Activated CD4-positive, alpha-beta memory T cell treated with anti-CD3 and anti-CD28 coated beads for 36 hours (primary cell): ENCODE measurements at regions of chr16 and their contacts with region 1.

Region 1: GRCh38 chr16:81314603-81315270 is at the start of gene GAN:
- DNase-seq: peak; percentile 98
- H3K4me3 Mint-ChIP-seq: peak within 1 kb of the TSS; percentile 84
- H3K27ac Mint-ChIP-seq: peak within 1 kb of the TSS; percentile 71
- H3K4me1 Mint-ChIP-seq: peaks cover 61% of the 10 kb centered on the region
- H3K27me3 Mint-ChIP-seq: no peaks in the 10 kb centered on the region
- total RNA-seq, gene GAN: 13.6 to 14.5 TPM

Region 2: GRCh38 chr16:81035398-81035974 is 279.3 kb before region 1 on chr16 and contains the start of gene ATMIN:
- CTCF ChIA-PET with region 1: interaction called, 3 read pairs
- POLR2A ChIA-PET with region 1: no interaction called
- intact Hi-C with region 1: loop called (anchors 10 kb)
- DNase-seq: peak; percentile 89
- H3K4me3 Mint-ChIP-seq: peak within 1 kb of the TSS; percentile 79
- H3K27ac Mint-ChIP-seq: no peak within 1 kb of the TSS
- H3K4me1 Mint-ChIP-seq: peaks cover 21% of the 10 kb centered on the region
- H3K27me3 Mint-ChIP-seq: no peaks in the 10 kb centered on the region
- total RNA-seq, gene ATMIN: 19.3 to 21.3 TPM

Region 3: DNA sequence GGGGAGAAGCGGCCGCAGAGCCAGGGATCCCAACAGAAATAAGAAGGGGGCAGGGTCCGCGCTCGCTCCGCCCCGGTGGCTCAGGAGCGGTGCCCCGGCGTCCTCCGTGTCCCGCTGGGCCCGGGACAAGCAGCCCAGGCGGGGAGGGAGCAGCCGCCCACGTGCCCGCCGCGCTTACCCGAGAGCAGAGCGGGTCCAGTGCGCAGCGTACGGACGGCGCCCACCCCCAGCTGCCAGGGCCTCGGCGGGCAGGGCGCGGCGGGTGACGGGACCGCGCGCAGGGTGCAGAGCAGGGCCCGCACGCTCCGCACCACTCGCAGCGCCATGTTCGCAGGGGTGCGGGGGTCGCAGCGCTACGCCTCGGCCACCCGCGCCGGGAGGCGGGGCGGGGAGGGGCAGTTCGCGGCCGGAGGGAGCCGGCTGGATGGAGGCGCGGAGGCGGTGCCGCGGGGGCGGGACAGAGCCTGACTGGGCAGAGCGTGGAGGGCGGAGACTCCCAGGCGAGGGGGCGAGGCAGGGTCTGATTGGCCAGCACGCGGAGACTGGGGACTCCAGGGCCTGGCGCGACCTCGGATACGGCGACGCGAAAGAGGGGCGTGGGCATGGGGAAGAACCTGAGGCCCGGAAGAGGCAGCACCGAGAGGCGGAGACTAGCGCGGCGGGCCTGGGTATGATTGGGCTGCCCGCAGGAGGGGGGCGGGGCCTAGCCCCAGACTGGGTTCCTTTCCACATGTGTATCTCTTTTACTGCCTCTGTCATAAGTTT is 218.6 kb before region 1 on chr16 and contains the start of gene GCSH:
- CTCF ChIA-PET with region 1: no interaction called
- POLR2A ChIA-PET with region 1: no interaction called
- intact Hi-C with region 1: loop called (anchors 1 kb)
- DNase-seq: peak; percentile 99
- H3K4me3 Mint-ChIP-seq: peak within 1 kb of the TSS; percentile 79
- H3K27ac Mint-ChIP-seq: peak within 1 kb of the TSS; percentile 70
- H3K4me1 Mint-ChIP-seq: peaks cover 14% of the 10 kb centered on the region
- H3K27me3 Mint-ChIP-seq: no peaks in the 10 kb centered on the region
- total RNA-seq, gene GCSH: 23.9 to 24.7 TPM

Region 4: DNA sequence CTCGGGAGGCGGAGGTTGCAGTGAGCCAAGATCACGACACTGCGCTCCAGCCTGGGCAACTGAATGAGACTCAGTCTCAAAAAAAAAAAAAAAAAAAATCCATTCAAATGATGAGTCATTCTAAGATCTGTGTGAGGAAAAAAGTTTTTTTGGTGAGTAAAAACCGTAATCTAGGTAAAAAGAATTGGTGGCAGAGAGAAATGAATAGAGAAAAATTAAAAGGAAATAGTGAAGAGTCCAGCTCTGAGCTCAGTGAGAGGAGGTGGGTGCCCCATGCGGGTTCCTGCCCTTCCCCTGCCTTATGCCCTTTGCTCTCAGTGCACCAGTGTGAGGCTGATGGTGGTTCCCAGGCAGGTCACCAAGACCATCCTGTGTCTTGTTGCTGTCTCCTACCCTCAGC is 20.9 kb after region 1 on chr16:
- CTCF ChIA-PET with region 1: interaction called, 5 read pairs
- POLR2A ChIA-PET with region 1: interaction called, 17 read pairs
- intact Hi-C with region 1: loop called (anchors 2 kb)
- DNase-seq: peak; percentile 75
- H3K4me3 Mint-ChIP-seq: no peak overlapping the region
- H3K27ac Mint-ChIP-seq: peak overlapping the region; percentile 52
- H3K4me1 Mint-ChIP-seq: peaks cover 20% of the 10 kb centered on the region
- H3K27me3 Mint-ChIP-seq: no peaks in the 10 kb centered on the region

Region 5: GRCh38 chr16:81632392-81633146 is 317.8 kb after region 1 on chr16:
- CTCF ChIA-PET with region 1: no interaction called
- POLR2A ChIA-PET with region 1: no interaction called
- intact Hi-C with region 1: loop called (anchors 2 kb)
- DNase-seq: peak; percentile 92
- H3K4me3 Mint-ChIP-seq: peak overlapping the region; percentile 52
- H3K27ac Mint-ChIP-seq: peak overlapping the region; percentile 94
- H3K4me1 Mint-ChIP-seq: peaks cover 49% of the 10 kb centered on the region
- H3K27me3 Mint-ChIP-seq: no peaks in the 10 kb centered on the region